Mammary epithelial cell (primary cell): ENCODE measurements at regions of chr1 and their contacts with region 1.

Region 1: GRCh38 chr1:22388671-22389450 is 62.8 kb upstream of the ZBTB40 start:
- DNase-seq: peak; percentile 39
- H3K4me3 ChIP-seq: no peak overlapping the region
- H3K27ac ChIP-seq: no peak overlapping the region
- H3K4me1 ChIP-seq: peaks cover 11% of the 10 kb centered on the region
- H3K27me3 ChIP-seq: no peaks in the 10 kb centered on the region
- CTCF ChIP-seq: no peak

Region 2: DNA sequence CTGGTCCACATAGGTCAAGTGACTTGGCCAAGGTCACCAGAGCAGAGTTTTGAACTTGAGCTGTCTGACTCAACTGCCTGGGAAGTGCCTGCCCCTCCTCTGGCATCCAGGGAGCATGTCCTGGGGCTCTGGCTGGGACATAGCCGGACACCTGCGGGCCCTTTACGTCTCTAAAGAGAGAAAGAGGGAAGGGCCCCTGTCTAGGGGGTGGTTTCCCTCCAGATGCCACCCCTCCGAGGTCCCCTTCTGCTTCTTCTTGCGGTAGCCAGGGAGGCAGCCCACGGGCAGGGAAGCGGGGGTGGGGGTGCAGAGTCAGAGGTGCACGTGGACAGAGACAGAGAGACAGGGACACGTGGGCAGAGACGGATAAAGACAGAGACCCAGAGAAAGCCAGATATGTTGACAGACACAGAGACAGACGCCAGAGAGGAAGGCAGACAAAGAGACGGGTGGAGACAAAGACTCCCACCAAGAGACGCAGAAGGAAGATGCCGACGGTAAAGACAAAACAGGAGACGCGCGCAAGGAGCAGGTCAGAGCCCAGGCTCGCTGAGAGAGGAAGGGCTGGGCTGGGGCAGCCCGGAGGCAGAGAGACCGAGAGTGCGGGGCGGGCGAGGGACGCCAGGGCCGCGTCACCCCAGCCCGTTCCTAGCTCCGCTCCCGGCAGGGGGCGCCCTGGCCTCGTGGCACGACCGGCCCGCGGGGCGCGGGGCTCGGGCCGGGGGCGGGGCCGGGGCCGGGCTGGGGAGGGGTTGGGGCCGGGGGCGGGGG is 880.1 kb before region 1 on chr1:
- CTCF ChIA-PET with region 1: no interaction called
- dilution Hi-C with region 1: no loop called
- in situ Hi-C with region 1: no loop called
- intact Hi-C with region 1: no loop called
- DNase-seq: peak; percentile 21
- H3K4me3 ChIP-seq: peak overlapping the region in 2 of 3 experiments; percentile 18 to 21
- H3K27ac ChIP-seq: no peak overlapping the region
- H3K4me1 ChIP-seq: peaks cover 14% of the 10 kb centered on the region
- H3K27me3 ChIP-seq: peaks cover 13% of the 10 kb centered on the region
- CTCF ChIP-seq: peak; percentile 25 to 56

Region 3: GRCh38 chr1:22250724-22251123 is 138.1 kb before region 1 on chr1:
- CTCF ChIA-PET with region 1: no interaction called
- dilution Hi-C with region 1: no loop called
- in situ Hi-C with region 1: no loop called
- intact Hi-C with region 1: loop called (anchors 10 kb)
- DNase-seq: no peak
- H3K4me3 ChIP-seq: no peak overlapping the region
- H3K27ac ChIP-seq: no peak overlapping the region
- H3K4me1 ChIP-seq: peaks cover 6% of the 10 kb centered on the region
- H3K27me3 ChIP-seq: peaks cover 4% of the 10 kb centered on the region
- CTCF ChIP-seq: no peak

Region 4: GRCh38 chr1:22282364-22282995 is 106.4 kb before region 1 on chr1:
- CTCF ChIA-PET with region 1: interaction called, 3 read pairs
- dilution Hi-C with region 1: loop called (anchors 5 kb)
- in situ Hi-C with region 1: no loop called
- intact Hi-C with region 1: no loop called
- DNase-seq: no peak
- H3K4me3 ChIP-seq: no peak overlapping the region
- H3K27ac ChIP-seq: no peak overlapping the region
- H3K4me1 ChIP-seq: no peaks in the 10 kb centered on the region
- H3K27me3 ChIP-seq: peaks cover 1% of the 10 kb centered on the region
- CTCF ChIP-seq: no peak

Region 5: GRCh38 chr1:22317226-22317919 is 71.5 kb before region 1 on chr1:
- CTCF ChIA-PET with region 1: no interaction called
- dilution Hi-C with region 1: loop called (anchors 5 kb)
- in situ Hi-C with region 1: no loop called
- intact Hi-C with region 1: no loop called
- DNase-seq: no peak
- H3K4me3 ChIP-seq: no peak overlapping the region
- H3K27ac ChIP-seq: no peak overlapping the region
- H3K4me1 ChIP-seq: no peaks in the 10 kb centered on the region
- H3K27me3 ChIP-seq: no peaks in the 10 kb centered on the region
- CTCF ChIP-seq: peak; percentile 41 to 52

Region 6: DNA sequence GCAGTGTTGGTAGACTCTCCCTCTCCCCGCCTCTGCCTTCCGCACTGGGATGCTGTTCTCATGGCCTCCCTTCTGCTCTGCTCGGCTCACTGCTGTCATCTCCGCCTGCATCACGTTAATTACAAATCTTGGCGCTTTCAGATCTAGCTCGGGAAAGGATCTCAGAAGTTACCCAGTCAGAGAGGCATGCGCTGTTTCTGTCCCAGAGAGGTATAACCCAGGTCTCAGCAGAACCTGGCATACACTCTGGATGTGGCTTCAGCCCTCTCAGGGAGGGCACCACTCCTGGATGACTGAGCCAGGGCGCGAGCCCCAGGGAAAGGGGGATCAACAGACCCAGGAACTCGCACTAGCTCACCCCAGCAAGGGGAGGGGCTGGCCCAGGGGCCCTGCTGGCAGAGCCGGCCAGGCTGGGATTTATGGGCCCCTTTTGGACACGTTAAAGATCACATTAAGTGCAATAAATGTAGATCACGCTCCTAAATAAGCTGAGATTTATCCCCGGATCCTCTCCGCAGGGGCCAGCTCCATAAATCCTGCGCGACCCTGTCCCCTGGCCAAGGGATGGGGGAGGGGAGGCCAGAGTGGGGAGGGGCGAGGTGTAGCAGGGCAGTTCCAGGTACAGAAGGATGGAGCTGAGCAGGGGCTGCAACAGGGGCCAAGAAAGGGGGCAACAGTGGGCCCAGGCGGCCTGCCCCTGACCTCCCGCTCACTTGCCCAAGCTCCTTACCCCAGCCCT is 38.5 kb before region 1 on chr1:
- CTCF ChIA-PET with region 1: no interaction called
- dilution Hi-C with region 1: no loop called
- in situ Hi-C with region 1: no loop called
- intact Hi-C with region 1: no loop called
- DNase-seq: no peak
- H3K4me3 ChIP-seq: no peak overlapping the region
- H3K27ac ChIP-seq: no peak overlapping the region
- H3K4me1 ChIP-seq: no peaks in the 10 kb centered on the region
- H3K27me3 ChIP-seq: no peaks in the 10 kb centered on the region
- CTCF ChIP-seq: no peak